ENCODE measurements at regions of chr10 and their contacts with region 1.

Region 1: GRCh38 chr10:13299437-13300287 is at the start of gene PHYH:
- DNase-seq: peak; percentile 64
- ATAC-seq: peak; percentile 81
- H3K4me3 ChIP-seq: peak within 1 kb of the TSS; percentile 53 to 68
- H3K27ac ChIP-seq: peak within 1 kb of the TSS; percentile 85
- H3K4me1 ChIP-seq: peaks cover 15 to 34% of the 10 kb centered on the region in 2 experiments
- H3K27me3 ChIP-seq: no peaks in the 10 kb centered on the region
- CTCF ChIP-seq: no peak
- POLR2A ChIP-seq: peak; percentile 67
- RAD21 ChIP-seq: no peak
- total RNA-seq, gene PHYH: 15.3 TPM

Region 2: GRCh38 chr10:13099666-13100348 is 199.9 kb before region 1 on chr10 and contains the start of gene OPTN:
- CTCF ChIA-PET with region 1: interaction called, 3 read pairs
- POLR2A ChIA-PET with region 1: interaction called, 4 read pairs
- RAD21 ChIA-PET with region 1: no interaction called
- intact Hi-C with region 1: loop called (anchors 2 kb)
- DNase-seq: peak; percentile 64
- ATAC-seq: peak; percentile 81
- H3K4me3 ChIP-seq: peak within 1 kb of the TSS; percentile 62 to 75
- H3K27ac ChIP-seq: peak within 1 kb of the TSS; percentile 60
- H3K4me1 ChIP-seq: peaks cover 9 to 28% of the 10 kb centered on the region in 2 experiments; a peak in 3 of 4 replicates
- H3K27me3 ChIP-seq: no peaks in the 10 kb centered on the region
- CTCF ChIP-seq: peak; percentile 56 to 84 (median 71); a peak in 5 of 6 replicates
- POLR2A ChIP-seq: no peak
- RAD21 ChIP-seq: peak; percentile 84
- total RNA-seq, gene OPTN: 17.0 TPM

Region 3: GRCh38 chr10:13206546-13207443 is 92.9 kb before region 1 on chr10:
- CTCF ChIA-PET with region 1: interaction called, 15 read pairs
- POLR2A ChIA-PET with region 1: no interaction called
- RAD21 ChIA-PET with region 1: no interaction called
- intact Hi-C with region 1: loop called (anchors 1 kb)
- DNase-seq: peak; percentile 13
- ATAC-seq: no peak
- H3K4me3 ChIP-seq: no peak overlapping the region
- H3K27ac ChIP-seq: no peak overlapping the region
- H3K4me1 ChIP-seq: no peaks in the 10 kb centered on the region
- H3K27me3 ChIP-seq: no peaks in the 10 kb centered on the region
- CTCF ChIP-seq: peak in 2 of 3 experiments; percentile 44 to 51; a peak in 4 of 6 replicates
- POLR2A ChIP-seq: no peak
- RAD21 ChIP-seq: peak; percentile 49

Region 4: GRCh38 chr10:13271552-13272163 is 28.0 kb before region 1 on chr10:
- CTCF ChIA-PET with region 1: interaction called, 11 read pairs
- POLR2A ChIA-PET with region 1: no interaction called
- RAD21 ChIA-PET with region 1: no interaction called
- intact Hi-C with region 1: no loop called
- DNase-seq: peak; percentile 32
- ATAC-seq: peak; percentile 96
- H3K4me3 ChIP-seq: no peak overlapping the region
- H3K27ac ChIP-seq: no peak overlapping the region
- H3K4me1 ChIP-seq: peaks cover 12 to 18% of the 10 kb centered on the region in 2 experiments
- H3K27me3 ChIP-seq: no peaks in the 10 kb centered on the region
- CTCF ChIP-seq: peak; percentile 44 to 81 (median 81); a peak in 5 of 6 replicates
- POLR2A ChIP-seq: no peak
- RAD21 ChIP-seq: peak; percentile 51

Region 5: GRCh38 chr10:13485623-13486022 is 186.0 kb after region 1 on chr10:
- CTCF ChIA-PET with region 1: no interaction called
- POLR2A ChIA-PET with region 1: no interaction called
- RAD21 ChIA-PET with region 1: no interaction called
- intact Hi-C with region 1: no loop called
- DNase-seq: no peak
- ATAC-seq: peak; percentile 52; the same call in 1 of the 2 replicates
- H3K4me3 ChIP-seq: no peak overlapping the region
- H3K27ac ChIP-seq: no peak overlapping the region
- H3K4me1 ChIP-seq: no peaks in the 10 kb centered on the region
- H3K27me3 ChIP-seq: no peaks in the 10 kb centered on the region
- CTCF ChIP-seq: peak in 1 of 3 experiments; percentile 43; a peak in 2 of 6 replicates
- POLR2A ChIP-seq: no peak
- RAD21 ChIP-seq: no peak

Region 6: DNA sequence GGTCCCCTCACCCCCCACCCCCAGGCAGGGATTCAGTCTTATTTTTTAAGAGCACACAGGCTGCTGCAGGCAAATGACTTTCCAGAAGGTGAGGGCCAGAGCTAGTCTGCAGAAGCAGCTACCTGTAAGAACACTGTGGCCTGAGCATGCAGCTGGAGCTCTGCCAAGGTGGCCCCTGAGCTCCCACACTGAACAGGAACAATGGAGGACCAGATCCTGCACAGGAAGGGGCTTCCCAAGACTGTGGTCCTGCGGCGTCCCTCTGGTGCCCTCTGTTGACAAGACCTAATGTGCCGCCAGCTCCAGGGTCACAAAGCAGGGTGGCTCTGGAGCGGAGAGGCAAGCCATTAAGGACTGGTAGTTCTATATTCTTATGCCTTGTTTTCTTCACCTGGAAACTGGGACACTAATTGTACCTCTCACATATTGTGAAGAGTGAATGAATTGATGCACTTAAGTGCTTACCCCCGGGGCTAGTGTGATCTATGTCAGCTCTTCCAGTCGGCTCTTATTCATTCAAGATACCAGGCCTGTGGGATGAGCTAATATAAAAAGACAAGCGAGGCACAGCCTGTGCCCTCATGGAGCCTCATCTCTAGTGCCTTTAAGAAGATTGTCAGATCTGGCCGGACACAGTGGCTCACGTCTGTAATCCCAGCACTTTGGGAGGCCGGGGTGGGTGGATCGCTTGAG is 237.2 kb after region 1 on chr10:
- CTCF ChIA-PET with region 1: interaction called, 12 read pairs
- POLR2A ChIA-PET with region 1: no interaction called
- RAD21 ChIA-PET with region 1: no interaction called
- intact Hi-C with region 1: no loop called
- DNase-seq: peak; percentile 33
- ATAC-seq: peak; percentile 100
- H3K4me3 ChIP-seq: no peak overlapping the region
- H3K27ac ChIP-seq: no peak overlapping the region
- H3K4me1 ChIP-seq: peaks cover 0 to 3% of the 10 kb centered on the region in 2 experiments; a peak in 1 of 4 replicates
- H3K27me3 ChIP-seq: no peaks in the 10 kb centered on the region
- CTCF ChIP-seq: peak; percentile 62 to 84 (median 80); a peak in 5 of 6 replicates
- POLR2A ChIP-seq: no peak
- RAD21 ChIP-seq: peak; percentile 78

Measured in HCT116 (cell line).